ENCODE measurements at regions of chr21 and their contacts with region 1.

Region 1: GRCh38 chr21:37642493-37642892 is 273.8 kb downstream of the KCNJ6 start:
- DNase-seq: peak; percentile 64
- H3K4me3 ChIP-seq: no peak overlapping the region
- H3K27ac ChIP-seq: no peak overlapping the region
- H3K4me1 ChIP-seq: no peaks in the 10 kb centered on the region
- H3K27me3 ChIP-seq: peaks cover 17% of the 10 kb centered on the region
- CTCF ChIP-seq: peak; percentile 51

Region 2: DNA sequence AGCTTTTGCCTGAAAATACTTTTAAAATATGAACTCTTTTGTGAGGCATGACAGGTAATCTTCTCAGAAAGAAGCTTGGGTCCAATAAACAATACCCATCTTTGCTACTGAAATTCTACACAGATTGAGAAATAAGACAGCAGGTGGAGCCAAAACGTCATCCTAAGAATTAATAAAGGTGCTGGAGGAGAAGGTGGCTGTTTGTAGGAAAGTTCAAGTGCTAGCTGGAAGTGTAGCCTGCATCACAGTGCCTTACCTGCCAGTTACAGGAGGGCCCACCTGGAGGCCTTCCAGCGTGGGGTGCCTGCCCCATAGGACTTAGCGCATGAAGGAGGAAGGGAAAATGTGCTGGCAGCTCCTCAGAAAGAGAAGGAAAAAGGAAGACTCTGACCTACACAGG is 475.8 kb before region 1 on chr21:
- CTCF ChIA-PET with region 1: no interaction called
- POLR2A ChIA-PET with region 1: no interaction called
- intact Hi-C with region 1: loop called (anchors 10 kb)
- DNase-seq: no peak
- H3K4me3 ChIP-seq: no peak overlapping the region
- H3K27ac ChIP-seq: no peak overlapping the region
- H3K4me1 ChIP-seq: peaks cover 16% of the 10 kb centered on the region
- H3K27me3 ChIP-seq: no peaks in the 10 kb centered on the region
- CTCF ChIP-seq: peak; percentile 40

Measured in A673 (cell line).